ENCODE measurements at regions of chr7 and their contacts with region 1.

Region 1: GRCh38 chr7:112080441-112080840 is 125.8 kb downstream of the DOCK4 start:
- DNase-seq: peak; percentile 40 to 94
- ATAC-seq: peak; percentile 93 to 97
- H3K4me3 ChIP-seq: peak overlapping the region; percentile 33
- H3K27ac ChIP-seq: peak overlapping the region; percentile 76 to 85
- H3K4me1 ChIP-seq: peaks cover 73% of the 10 kb centered on the region
- CTCF ChIP-seq: no peak
- EP300 ChIP-seq: peak; percentile 65 to 84; a peak in 3 of 5 replicates
- POLR2A ChIP-seq: no peak
- RAD21 ChIP-seq: peak; percentile 19 to 24; a peak in 1 of 5 replicates

Region 2: DNA sequence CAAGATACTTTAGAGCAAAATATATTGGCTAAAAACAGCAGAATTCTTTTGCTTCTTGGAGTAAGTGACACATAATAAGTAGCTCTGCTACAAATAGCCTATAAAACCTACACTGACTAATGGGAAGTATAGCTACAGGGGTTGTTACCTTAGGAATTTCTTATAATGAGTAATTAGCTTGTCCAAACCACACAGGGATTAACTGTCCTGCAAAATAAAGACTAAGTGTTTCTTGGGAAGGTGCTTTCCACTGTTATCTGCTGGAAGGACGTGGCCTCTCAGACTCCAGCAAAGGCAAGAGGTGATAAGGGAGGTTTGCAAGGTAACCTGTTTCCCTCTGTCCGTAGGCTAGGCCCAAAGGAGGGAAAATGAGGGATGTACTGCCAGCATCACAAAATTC is 176.6 kb before region 1 on chr7:
- CTCF ChIA-PET with region 1: no interaction called
- POLR2A ChIA-PET with region 1: no interaction called
- DNase-seq: no peak
- ATAC-seq: no peak
- H3K4me3 ChIP-seq: no peak overlapping the region
- H3K27ac ChIP-seq: no peak overlapping the region
- H3K4me1 ChIP-seq: no peaks in the 10 kb centered on the region
- CTCF ChIP-seq: no peak
- EP300 ChIP-seq: no peak
- POLR2A ChIP-seq: no peak
- RAD21 ChIP-seq: no peak

Region 3: GRCh38 chr7:112069879-112070321 is 10.5 kb before region 1 on chr7:
- CTCF ChIA-PET with region 1: interaction called, 12 read pairs
- POLR2A ChIA-PET with region 1: no interaction called
- DNase-seq: no peak
- ATAC-seq: no peak
- H3K4me3 ChIP-seq: no peak overlapping the region
- H3K27ac ChIP-seq: peak overlapping the region; percentile 2 to 72; a peak in 4 of 6 replicates
- H3K4me1 ChIP-seq: peaks cover 78% of the 10 kb centered on the region
- CTCF ChIP-seq: no peak
- EP300 ChIP-seq: no peak
- POLR2A ChIP-seq: no peak
- RAD21 ChIP-seq: no peak

Region 4: GRCh38 chr7:112206238-112207044 is 126.0 kb after region 1 on chr7 and contains the starts of genes DOCK4 and ZNF277:
- CTCF ChIA-PET with region 1: interaction called, 10 read pairs
- POLR2A ChIA-PET with region 1: interaction called, 6 read pairs
- DNase-seq: peak; percentile 96 to 99
- ATAC-seq: peak; percentile 87 to 93
- H3K4me3 ChIP-seq: peak within 1 kb of the TSS; percentile 89
- H3K27ac ChIP-seq: peak within 1 kb of the TSS; percentile 87 to 90
- H3K4me1 ChIP-seq: peaks cover 32% of the 10 kb centered on the region
- CTCF ChIP-seq: no peak
- EP300 ChIP-seq: no peak
- POLR2A ChIP-seq: peak; percentile 69
- RAD21 ChIP-seq: peak in 1 of 2 experiments; percentile 1; a peak in 3 of 5 replicates
- polyA plus RNA-seq, gene DOCK4: 13.6 and 15.7 TPM in 2 replicates
- polyA plus RNA-seq, gene ZNF277: 25.8 and 31.9 TPM in 2 replicates